AG04449 (cell line): ENCODE measurements at regions of chr9 and their contacts with region 1.

Region 1: DNA sequence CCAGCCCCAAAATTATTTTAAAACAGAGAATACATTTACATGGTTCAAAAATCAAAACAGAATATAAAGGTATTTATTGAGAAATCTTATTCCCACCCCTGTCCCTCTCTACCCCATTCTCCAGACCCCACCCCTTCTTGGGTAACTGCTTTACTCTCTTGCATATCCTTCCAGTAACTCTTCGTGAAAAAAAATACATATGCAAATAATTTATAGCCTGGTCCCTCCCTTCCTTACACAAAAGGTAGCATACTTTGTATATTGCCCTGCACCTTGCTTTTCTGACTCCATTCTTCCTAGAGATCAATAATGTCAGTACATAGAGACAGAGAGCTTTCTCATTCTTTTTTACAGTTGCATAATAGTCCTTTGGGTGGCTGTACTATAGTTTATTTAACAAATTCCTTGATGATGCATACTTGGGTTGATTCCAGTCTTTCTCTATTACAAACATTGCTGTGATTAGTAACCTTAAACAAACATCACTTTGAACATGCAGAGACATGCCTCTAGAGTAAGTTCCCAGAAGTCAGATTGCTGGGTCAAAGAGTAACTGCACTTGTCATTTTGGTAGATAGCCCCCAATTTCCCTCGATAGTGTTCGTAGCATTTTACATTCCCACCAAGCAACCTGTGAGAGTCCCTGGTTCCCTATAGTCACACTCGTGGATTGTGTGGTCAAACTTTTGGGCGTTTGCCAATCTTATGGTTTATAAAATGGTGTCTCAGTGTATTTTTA is 47.8 kb downstream of the STOM start:
- DNase-seq: peak; percentile 87
- H3K4me3 ChIP-seq: no peak overlapping the region
- CTCF ChIP-seq: no peak

Region 2: DNA sequence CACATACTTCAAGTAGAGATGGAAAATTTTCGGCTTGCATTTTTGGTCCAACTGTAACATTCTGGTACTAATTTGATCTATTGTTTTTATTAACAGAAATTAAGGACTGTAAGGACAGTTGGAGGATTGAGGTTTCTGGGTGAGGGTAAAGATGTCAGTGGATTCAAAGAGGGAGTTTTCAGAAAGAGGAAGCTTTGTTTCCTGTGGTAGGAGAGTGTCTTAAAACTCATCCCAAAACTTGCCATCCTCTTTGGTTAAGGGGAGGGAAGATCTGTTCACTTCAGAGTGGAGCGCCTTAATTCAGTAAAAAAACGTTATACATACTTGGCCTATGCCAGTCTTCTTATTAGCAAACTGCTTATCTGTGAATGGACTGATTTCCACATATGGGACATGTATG is 233.6 kb before region 1 on chr9:
- CTCF ChIA-PET with region 1: no interaction called
- POLR2A ChIA-PET with region 1: no interaction called
- DNase-seq: no peak
- H3K4me3 ChIP-seq: no peak overlapping the region
- CTCF ChIP-seq: no peak

Region 3: GRCh38 chr9:121107041-121107440 is 215.2 kb before region 1 on chr9:
- CTCF ChIA-PET with region 1: no interaction called
- POLR2A ChIA-PET with region 1: no interaction called
- DNase-seq: no peak
- H3K4me3 ChIP-seq: no peak overlapping the region
- CTCF ChIP-seq: no peak

Region 4: GRCh38 chr9:121187636-121188305 is 134.4 kb before region 1 on chr9:
- CTCF ChIA-PET with region 1: interaction called, 10 read pairs
- POLR2A ChIA-PET with region 1: no interaction called
- DNase-seq: no peak
- H3K4me3 ChIP-seq: no peak overlapping the region
- CTCF ChIP-seq: no peak

Region 5: GRCh38 chr9:121233906-121234901 is 88.0 kb before region 1 on chr9:
- CTCF ChIA-PET with region 1: interaction called, 16 read pairs
- POLR2A ChIA-PET with region 1: no interaction called
- DNase-seq: no peak
- H3K4me3 ChIP-seq: no peak overlapping the region
- CTCF ChIP-seq: no peak

Region 6: GRCh38 chr9:121286973-121287741 is 35.0 kb before region 1 on chr9:
- CTCF ChIA-PET with region 1: interaction called, 27 read pairs
- POLR2A ChIA-PET with region 1: interaction called, 3 read pairs
- DNase-seq: peak; percentile 58
- H3K4me3 ChIP-seq: peak overlapping the region; percentile 13
- CTCF ChIP-seq: peak; percentile 11

Region 7: GRCh38 chr9:121350993-121351561 is 28.9 kb after region 1 on chr9:
- CTCF ChIA-PET with region 1: interaction called, 31 read pairs
- POLR2A ChIA-PET with region 1: no interaction called
- DNase-seq: no peak
- H3K4me3 ChIP-seq: no peak overlapping the region
- CTCF ChIP-seq: no peak

Region 8: DNA sequence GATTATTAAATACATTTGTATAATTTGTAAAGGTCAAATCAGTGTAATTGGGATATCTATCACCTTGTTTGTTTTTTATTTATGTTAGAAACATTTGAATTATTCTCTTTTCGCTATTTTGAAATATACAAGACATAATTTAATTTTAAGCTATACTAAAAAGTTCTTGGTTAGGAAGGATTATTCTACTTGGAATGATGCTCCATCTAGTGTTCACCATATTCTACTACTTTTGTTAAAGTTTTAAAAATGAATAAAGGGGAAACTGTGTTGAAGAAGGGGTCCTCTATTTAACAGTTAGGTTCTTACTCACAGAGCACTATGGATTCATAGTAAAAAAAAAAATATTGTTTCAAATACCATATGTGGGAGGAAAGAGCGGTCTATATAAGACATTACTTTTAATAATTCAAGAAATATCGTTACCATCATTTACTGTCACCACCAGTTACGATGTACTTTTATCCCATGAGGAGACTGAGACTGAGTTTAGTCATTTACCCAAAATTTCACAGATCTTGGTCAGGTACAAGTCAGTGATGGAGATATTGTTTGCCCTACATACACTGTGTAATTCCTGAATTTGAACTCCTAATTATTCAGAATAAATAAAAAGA is 54.1 kb after region 1 on chr9:
- CTCF ChIA-PET with region 1: interaction called, 297 read pairs
- POLR2A ChIA-PET with region 1: no interaction called
- DNase-seq: no peak
- H3K4me3 ChIP-seq: no peak overlapping the region
- CTCF ChIP-seq: no peak

Region 9: GRCh38 chr9:121483049-121483448 is 160.8 kb after region 1 on chr9:
- CTCF ChIA-PET with region 1: no interaction called
- POLR2A ChIA-PET with region 1: no interaction called
- DNase-seq: no peak
- H3K4me3 ChIP-seq: no peak overlapping the region
- CTCF ChIP-seq: no peak